ENCODE measurements at regions of chr10 and their contacts with region 1.

Region 1: GRCh38 chr10:121900443-121901174 is 27.2 kb downstream of the ATE1 start:
- DNase-seq: peak in 3 of 35 experiments; percentile 2 to 64 (median 4)
- ATAC-seq: peak in 3 of 4 experiments; percentile 43 to 73 (median 47)
- H3K4me3 ChIP-seq: no peak overlapping the region
- H3K4me3 Mint-ChIP-seq: no peak overlapping the region
- H3K27ac ChIP-seq: no peak overlapping the region
- H3K27ac Mint-ChIP-seq: no peak overlapping the region
- H3K4me1 ChIP-seq: no peaks in the 10 kb centered on the region
- H3K4me1 Mint-ChIP-seq: peaks cover 4 to 5% (median 5%) of the 10 kb centered on the region in 3 donors
- H3K27me3 ChIP-seq: no peaks in the 10 kb centered on the region
- H3K27me3 Mint-ChIP-seq: no peaks in the 10 kb centered on the region

Region 2: DNA sequence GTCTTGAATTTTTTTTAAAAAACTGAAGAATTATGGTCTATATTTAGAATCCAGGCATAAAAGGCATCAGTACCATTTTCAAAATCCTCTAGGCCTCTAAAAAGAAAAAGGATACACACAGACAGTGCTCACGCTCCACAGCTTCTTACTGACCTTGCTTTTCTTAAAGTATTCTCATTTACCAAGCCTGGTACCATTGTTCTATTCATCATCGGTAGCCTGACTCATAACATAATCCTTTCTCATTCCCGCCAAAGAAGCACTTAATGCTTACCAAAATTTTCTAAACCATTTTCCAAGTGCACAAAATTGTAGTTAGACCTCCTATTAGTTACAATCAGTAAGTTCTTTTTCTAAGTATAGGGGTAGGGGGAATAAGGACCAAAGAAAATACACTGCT is 27.4 kb before region 1 on chr10:
- CTCF ChIA-PET with region 1: no interaction called
- POLR2A ChIA-PET with region 1: interaction called in 1 of 2 experiments, 15 read pairs
- DNase-seq: no peak
- ATAC-seq: no peak
- H3K4me3 ChIP-seq: no peak overlapping the region
- H3K4me3 Mint-ChIP-seq: no peak overlapping the region
- H3K27ac ChIP-seq: no peak overlapping the region
- H3K27ac Mint-ChIP-seq: no peak overlapping the region
- H3K4me1 ChIP-seq: no peaks in the 10 kb centered on the region
- H3K4me1 Mint-ChIP-seq: peaks cover 0 to 2% (median 0%) of the 10 kb centered on the region in 3 donors
- H3K27me3 ChIP-seq: no peaks in the 10 kb centered on the region
- H3K27me3 Mint-ChIP-seq: no peaks in the 10 kb centered on the region

Region 3: GRCh38 chr10:121927841-121928527 is 27.4 kb after region 1 on chr10 and contains the start of gene ATE1:
- CTCF ChIA-PET with region 1: no interaction called
- POLR2A ChIA-PET with region 1: no interaction called
- DNase-seq: peak; percentile 62 to 90 (median 77)
- ATAC-seq: peak; percentile 96 to 98 (median 97)
- H3K4me3 ChIP-seq: peak within 1 kb of the TSS; percentile 69 to 92
- H3K4me3 Mint-ChIP-seq: peak within 1 kb of the TSS; percentile 83 to 94 (median 92)
- H3K27ac ChIP-seq: peak within 1 kb of the TSS; percentile 89
- H3K27ac Mint-ChIP-seq: peak within 1 kb of the TSS; percentile 91 to 93
- H3K4me1 ChIP-seq: peaks cover 4 to 8% of the 10 kb centered on the region in 2 experiments
- H3K4me1 Mint-ChIP-seq: peaks cover 30 to 37% (median 34%) of the 10 kb centered on the region in 3 donors
- H3K27me3 ChIP-seq: no peaks in the 10 kb centered on the region
- H3K27me3 Mint-ChIP-seq: no peaks in the 10 kb centered on the region
- total RNA-seq, gene ATE1: 18.6 to 28.9 (median 26.0) TPM

Measured in T-cell (primary cell).